ENCODE measurements at regions of chr1 and their contacts with region 1.

Region 1: GRCh38 chr1:232635778-232636356 is 5.9 kb upstream of the SIPA1L2 start:
- DNase-seq: no peak
- ATAC-seq: peak; percentile 70

Region 2: GRCh38 chr1:233025157-233025915 is 389.5 kb after region 1 on chr1:
- intact Hi-C with region 1: loop called (anchors 5 kb)
- DNase-seq: peak; percentile 55
- ATAC-seq: peak; percentile 71

Region 3: GRCh38 chr1:233172227-233172626 is 536.4 kb after region 1 on chr1:
- intact Hi-C with region 1: loop called (anchors 5 kb)
- DNase-seq: no peak
- ATAC-seq: peak; percentile 67

Region 4: GRCh38 chr1:233240829-233241682 is 605.2 kb after region 1 on chr1:
- intact Hi-C with region 1: loop called (anchors 5 kb)
- DNase-seq: peak; percentile 74
- ATAC-seq: peak; percentile 93

Measured in Right ventricle myocardium superior (tissue), 1 donor.